Activated CD4-positive, alpha-beta memory T cell treated with anti-CD3 and anti-CD28 coated beads for 36 hours (primary cell): ENCODE measurements at regions of chr1 and their contacts with region 1.

Region 1: DNA sequence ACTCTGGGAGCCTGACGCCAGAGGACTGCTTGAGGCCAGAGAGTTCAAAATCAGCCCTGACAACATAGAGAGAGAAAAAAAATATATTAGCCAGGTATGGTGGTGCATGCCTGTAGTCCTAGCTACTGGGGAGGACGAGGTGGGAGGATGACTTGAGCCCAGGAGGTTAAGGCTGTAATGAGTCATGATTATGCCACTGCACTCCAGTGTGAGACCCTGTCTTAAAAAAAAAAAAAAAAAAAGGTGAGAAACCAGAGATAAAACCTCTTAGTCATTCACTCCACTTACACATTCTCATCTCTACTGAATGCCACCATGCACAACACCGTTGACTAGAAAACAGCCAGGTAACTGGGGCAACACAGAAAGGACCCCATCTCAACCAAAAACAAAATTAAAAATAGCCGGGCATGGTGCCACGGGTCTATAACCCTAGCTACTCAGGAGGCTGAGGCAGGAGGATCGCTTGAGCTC is 178.1 kb downstream of the SLC45A1 start:
- DNase-seq: peak; percentile 56
- H3K4me3 Mint-ChIP-seq: no peak overlapping the region
- H3K27ac Mint-ChIP-seq: peak overlapping the region; percentile 62
- H3K4me1 Mint-ChIP-seq: peaks cover 26% of the 10 kb centered on the region
- H3K27me3 Mint-ChIP-seq: no peaks in the 10 kb centered on the region

Region 2: GRCh38 chr1:8477166-8477982 is 18.6 kb before region 1 on chr1:
- CTCF ChIA-PET with region 1: no interaction called
- POLR2A ChIA-PET with region 1: interaction called, 4 read pairs
- intact Hi-C with region 1: loop called (anchors 1 kb)
- DNase-seq: peak; percentile 52
- H3K4me3 Mint-ChIP-seq: peak overlapping the region; percentile 26
- H3K27ac Mint-ChIP-seq: peak overlapping the region; percentile 40
- H3K4me1 Mint-ChIP-seq: peaks cover 50% of the 10 kb centered on the region
- H3K27me3 Mint-ChIP-seq: no peaks in the 10 kb centered on the region

Region 3: DNA sequence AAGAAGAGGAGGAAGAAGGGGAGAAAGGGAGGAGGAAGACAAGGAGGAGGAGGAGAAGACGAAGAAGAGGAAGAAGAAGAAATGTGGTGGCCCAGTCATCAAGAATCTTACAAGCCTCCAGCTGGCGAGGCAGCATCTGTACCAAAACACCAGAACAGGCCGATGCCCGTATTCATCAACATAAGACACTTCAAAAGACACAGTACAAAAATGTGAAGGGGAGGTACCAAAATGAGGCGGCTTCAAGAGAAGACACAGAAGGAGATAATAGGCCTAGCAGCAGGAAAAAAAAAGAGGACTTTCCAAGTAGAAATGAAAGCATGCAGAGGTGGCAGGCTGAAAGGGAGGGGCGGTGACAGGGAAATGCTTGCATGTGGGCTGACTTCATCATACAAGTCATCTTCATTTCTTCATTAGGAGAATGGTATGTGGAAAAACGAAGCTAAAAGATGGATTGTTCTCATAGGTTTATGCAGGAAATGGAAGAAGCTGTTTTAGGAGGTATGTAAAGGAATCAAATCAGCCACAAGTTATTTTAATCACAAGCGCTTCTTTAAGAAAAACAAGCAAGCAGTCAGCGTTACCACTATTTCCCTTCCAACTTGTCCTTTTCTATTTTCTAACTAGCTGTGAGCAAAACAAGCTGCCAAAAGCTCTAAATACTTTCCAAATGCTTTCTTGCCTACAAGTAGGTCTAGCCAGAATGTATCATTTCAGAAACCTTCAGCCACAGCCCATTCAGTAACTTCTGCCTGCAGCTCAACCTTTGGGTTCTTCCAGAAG is 14.3 kb after region 1 on chr1:
- CTCF ChIA-PET with region 1: no interaction called
- POLR2A ChIA-PET with region 1: interaction called, 3 read pairs
- intact Hi-C with region 1: loop called (anchors 1 kb)
- DNase-seq: peak; percentile 63
- H3K4me3 Mint-ChIP-seq: peak overlapping the region; percentile 62
- H3K27ac Mint-ChIP-seq: peak overlapping the region; percentile 88
- H3K4me1 Mint-ChIP-seq: peaks cover 35% of the 10 kb centered on the region
- H3K27me3 Mint-ChIP-seq: no peaks in the 10 kb centered on the region